ENCODE measurements at regions of chr4 and their contacts with region 1.

Region 1: GRCh38 chr4:102627831-102628523 is 126.8 kb downstream of the NFKB1 start:
- DNase-seq: no peak
- ATAC-seq: no peak
- H3K4me3 Mint-ChIP-seq: no peak overlapping the region
- H3K27ac Mint-ChIP-seq: no peak overlapping the region
- H3K4me1 Mint-ChIP-seq: peaks cover 62% of the 10 kb centered on the region
- H3K27me3 Mint-ChIP-seq: no peaks in the 10 kb centered on the region

Region 2: DNA sequence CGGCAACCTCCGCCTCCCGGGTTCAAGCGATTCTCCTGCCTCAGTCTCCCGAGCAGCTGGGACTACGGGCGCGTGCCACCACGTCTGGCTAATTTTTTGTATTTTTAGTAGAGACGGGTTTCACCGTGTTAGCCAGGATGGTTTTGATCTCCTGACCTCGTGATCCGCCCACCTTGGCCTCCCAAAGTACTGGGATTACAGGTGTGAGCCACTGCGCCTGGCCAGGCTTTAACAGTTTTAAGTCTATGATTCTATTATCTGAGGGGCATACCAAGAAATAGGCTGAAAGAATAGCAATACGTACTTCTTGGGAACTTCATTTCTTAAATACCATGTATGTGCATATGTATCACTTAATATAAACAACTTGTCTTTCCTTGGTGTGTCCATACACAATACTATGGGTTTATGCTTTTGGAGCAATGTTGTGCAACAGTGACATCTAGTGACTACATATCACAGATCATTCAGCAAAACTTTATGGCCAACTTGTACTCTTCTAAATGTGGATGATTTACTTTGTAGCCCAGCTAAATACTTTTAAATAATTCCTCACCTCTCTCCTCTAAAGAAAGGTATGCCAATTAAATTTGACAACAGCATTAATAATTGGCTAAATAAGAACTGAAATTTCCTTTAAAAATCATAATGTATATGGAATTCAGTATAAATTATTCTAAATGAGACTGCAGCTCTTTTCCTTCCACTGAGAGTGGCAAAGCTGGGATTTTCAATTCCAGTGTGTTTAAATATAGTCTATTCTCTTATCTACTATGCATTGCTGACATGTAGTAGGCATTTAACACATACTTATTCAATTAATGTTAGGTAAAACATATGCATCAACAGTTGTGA is 381.1 kb after region 1 on chr4:
- CTCF ChIA-PET with region 1: interaction called, 21 read pairs
- POLR2A ChIA-PET with region 1: no interaction called
- DNase-seq: peak; percentile 55
- ATAC-seq: peak; percentile 96
- H3K4me3 Mint-ChIP-seq: no peak overlapping the region
- H3K27ac Mint-ChIP-seq: no peak overlapping the region
- H3K4me1 Mint-ChIP-seq: no peaks in the 10 kb centered on the region
- H3K27me3 Mint-ChIP-seq: peaks cover 8% of the 10 kb centered on the region